CD4-positive, alpha-beta memory T cell (primary cell): ENCODE measurements at regions of chr18 and their contacts with region 1.

Region 1: DNA sequence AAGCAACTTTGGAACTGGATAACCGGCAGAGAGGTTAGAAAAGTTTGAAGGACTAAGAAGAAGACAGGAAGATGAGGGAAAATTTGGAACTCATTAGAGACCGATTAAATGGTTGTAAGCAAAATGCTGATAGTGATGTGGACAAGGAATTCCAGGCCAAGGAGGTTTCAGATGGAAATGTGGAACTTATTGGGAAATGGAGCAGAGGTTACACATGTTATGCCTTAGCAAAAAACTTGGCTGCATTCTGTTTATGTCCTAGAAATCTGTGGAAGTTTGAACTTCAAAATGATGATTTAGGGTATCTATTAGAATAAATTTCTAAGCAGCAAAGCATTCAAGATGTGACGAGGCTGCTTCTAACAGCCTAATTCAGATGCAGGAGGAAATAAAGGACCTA is 675.1 kb upstream of the SYT4 start:
- DNase-seq: no peak
- H3K4me3 ChIP-seq: no peak overlapping the region
- H3K4me3 Mint-ChIP-seq: no peak overlapping the region
- H3K27ac ChIP-seq: no peak overlapping the region
- H3K27ac Mint-ChIP-seq: peak overlapping the region in 1 of 7 donors; percentile 63
- H3K4me1 ChIP-seq: no peaks in the 10 kb centered on the region
- H3K4me1 Mint-ChIP-seq: no peaks in the 10 kb centered on the region
- H3K27me3 ChIP-seq: no peaks in the 10 kb centered on the region
- H3K27me3 Mint-ChIP-seq: no peaks in the 10 kb centered on the region

Region 2: DNA sequence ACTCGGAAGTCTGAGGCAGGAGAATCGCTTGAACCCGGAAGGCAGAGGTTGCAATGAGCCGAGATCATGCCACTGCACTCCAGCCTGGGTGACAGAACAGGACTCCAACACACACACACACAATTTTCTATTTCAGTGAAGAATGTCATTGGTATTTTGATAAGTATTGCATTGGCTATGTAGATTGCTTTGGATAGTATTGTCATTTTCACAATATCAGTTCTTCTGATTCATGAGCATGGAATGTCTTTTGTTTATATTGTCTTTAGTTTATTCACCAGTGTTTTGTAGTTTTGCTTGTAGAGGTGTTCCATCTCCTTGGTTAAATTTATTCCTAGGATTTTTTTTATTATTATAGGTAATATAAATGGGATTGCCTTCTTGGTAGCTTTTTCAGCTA is 18.3 kb after region 1 on chr18:
- CTCF ChIA-PET with region 1: no interaction called
- POLR2A ChIA-PET with region 1: no interaction called
- intact Hi-C with region 1: no loop called
- DNase-seq: no peak
- H3K4me3 ChIP-seq: no peak overlapping the region
- H3K4me3 Mint-ChIP-seq: no peak overlapping the region
- H3K27ac ChIP-seq: no peak overlapping the region
- H3K27ac Mint-ChIP-seq: no peak overlapping the region
- H3K4me1 ChIP-seq: no peaks in the 10 kb centered on the region
- H3K4me1 Mint-ChIP-seq: no peaks in the 10 kb centered on the region
- H3K27me3 ChIP-seq: no peaks in the 10 kb centered on the region
- H3K27me3 Mint-ChIP-seq: no peaks in the 10 kb centered on the region

Region 3: GRCh38 chr18:44013871-44014270 is 61.5 kb after region 1 on chr18:
- CTCF ChIA-PET with region 1: no interaction called
- POLR2A ChIA-PET with region 1: no interaction called
- intact Hi-C with region 1: loop called (anchors 10 kb)
- DNase-seq: no peak
- H3K4me3 ChIP-seq: no peak overlapping the region
- H3K4me3 Mint-ChIP-seq: no peak overlapping the region
- H3K27ac ChIP-seq: no peak overlapping the region
- H3K27ac Mint-ChIP-seq: no peak overlapping the region
- H3K4me1 ChIP-seq: no peaks in the 10 kb centered on the region
- H3K4me1 Mint-ChIP-seq: no peaks in the 10 kb centered on the region
- H3K27me3 ChIP-seq: no peaks in the 10 kb centered on the region
- H3K27me3 Mint-ChIP-seq: no peaks in the 10 kb centered on the region